Ascending aorta (tissue), 2 donors: ENCODE measurements at regions of chr7 and their contacts with region 1.

Region 1: GRCh38 chr7:130292682-130293257 is at the start of gene CPA4:
- DNase-seq: peak; percentile 16 to 88
- H3K4me3 ChIP-seq: no peak within 1 kb of the TSS
- H3K27ac ChIP-seq: peak within 1 kb of the TSS; percentile 78 to 79
- H3K4me1 ChIP-seq: peaks cover 0 to 14% of the 10 kb centered on the region in 2 donors
- H3K27me3 ChIP-seq: no peaks in the 10 kb centered on the region
- CTCF ChIP-seq: no peak
- total RNA-seq, gene CPA4: not detected

Region 2: GRCh38 chr7:129989466-129989865 is 303.3 kb before region 1 on chr7:
- intact Hi-C with region 1: no loop called
- DNase-seq: no peak
- H3K4me3 ChIP-seq: no peak overlapping the region
- H3K27ac ChIP-seq: no peak overlapping the region
- H3K4me1 ChIP-seq: peaks cover 0 to 6% of the 10 kb centered on the region in 2 donors
- H3K27me3 ChIP-seq: no peaks in the 10 kb centered on the region
- CTCF ChIP-seq: no peak

Region 3: GRCh38 chr7:130356121-130356875 is 63.5 kb after region 1 on chr7:
- intact Hi-C with region 1: loop called (anchors 10 kb)
- DNase-seq: peak in 1 of 2 donors; percentile 65
- H3K4me3 ChIP-seq: no peak overlapping the region
- H3K27ac ChIP-seq: peak overlapping the region; percentile 55 to 77
- H3K4me1 ChIP-seq: peaks cover 7 to 30% of the 10 kb centered on the region in 2 donors
- H3K27me3 ChIP-seq: no peaks in the 10 kb centered on the region
- CTCF ChIP-seq: no peak

Region 4: GRCh38 chr7:130486114-130486958 is 193.6 kb after region 1 on chr7:
- intact Hi-C with region 1: no loop called
- DNase-seq: no peak
- H3K4me3 ChIP-seq: peak overlapping the region; percentile 58 to 71
- H3K27ac ChIP-seq: no peak overlapping the region
- H3K4me1 ChIP-seq: peaks cover 0 to 14% of the 10 kb centered on the region in 2 donors
- H3K27me3 ChIP-seq: no peaks in the 10 kb centered on the region
- CTCF ChIP-seq: peak; percentile 39 to 72 (median 53)

Region 5: GRCh38 chr7:131625817-131626372 is 1333.1 kb after region 1 on chr7:
- intact Hi-C with region 1: no loop called
- DNase-seq: no peak
- H3K4me3 ChIP-seq: no peak overlapping the region
- H3K27ac ChIP-seq: peak overlapping the region in 1 of 2 donors; percentile 11
- H3K4me1 ChIP-seq: peaks cover 0 to 3% of the 10 kb centered on the region in 2 donors
- H3K27me3 ChIP-seq: no peaks in the 10 kb centered on the region
- CTCF ChIP-seq: no peak